Activated B cell treated with CpG ODN at 0.5 μM for 24 hours (primary cell): ENCODE measurements at regions of chr1 and their contacts with region 1.

Region 1: GRCh38 chr1:26921540-26922430 is at the start of gene NUDC:
- DNase-seq: peak; percentile 88
- ATAC-seq: peak; percentile 95
- H3K4me3 Mint-ChIP-seq: peak within 1 kb of the TSS; percentile 96
- H3K27ac Mint-ChIP-seq: peak within 1 kb of the TSS; percentile 95
- H3K4me1 Mint-ChIP-seq: peaks cover 31% of the 10 kb centered on the region
- H3K27me3 Mint-ChIP-seq: no peaks in the 10 kb centered on the region
- CTCF ChIP-seq: no peak
- total RNA-seq, gene NUDC: 71.7 and 73.7 TPM in 2 replicates

Region 2: DNA sequence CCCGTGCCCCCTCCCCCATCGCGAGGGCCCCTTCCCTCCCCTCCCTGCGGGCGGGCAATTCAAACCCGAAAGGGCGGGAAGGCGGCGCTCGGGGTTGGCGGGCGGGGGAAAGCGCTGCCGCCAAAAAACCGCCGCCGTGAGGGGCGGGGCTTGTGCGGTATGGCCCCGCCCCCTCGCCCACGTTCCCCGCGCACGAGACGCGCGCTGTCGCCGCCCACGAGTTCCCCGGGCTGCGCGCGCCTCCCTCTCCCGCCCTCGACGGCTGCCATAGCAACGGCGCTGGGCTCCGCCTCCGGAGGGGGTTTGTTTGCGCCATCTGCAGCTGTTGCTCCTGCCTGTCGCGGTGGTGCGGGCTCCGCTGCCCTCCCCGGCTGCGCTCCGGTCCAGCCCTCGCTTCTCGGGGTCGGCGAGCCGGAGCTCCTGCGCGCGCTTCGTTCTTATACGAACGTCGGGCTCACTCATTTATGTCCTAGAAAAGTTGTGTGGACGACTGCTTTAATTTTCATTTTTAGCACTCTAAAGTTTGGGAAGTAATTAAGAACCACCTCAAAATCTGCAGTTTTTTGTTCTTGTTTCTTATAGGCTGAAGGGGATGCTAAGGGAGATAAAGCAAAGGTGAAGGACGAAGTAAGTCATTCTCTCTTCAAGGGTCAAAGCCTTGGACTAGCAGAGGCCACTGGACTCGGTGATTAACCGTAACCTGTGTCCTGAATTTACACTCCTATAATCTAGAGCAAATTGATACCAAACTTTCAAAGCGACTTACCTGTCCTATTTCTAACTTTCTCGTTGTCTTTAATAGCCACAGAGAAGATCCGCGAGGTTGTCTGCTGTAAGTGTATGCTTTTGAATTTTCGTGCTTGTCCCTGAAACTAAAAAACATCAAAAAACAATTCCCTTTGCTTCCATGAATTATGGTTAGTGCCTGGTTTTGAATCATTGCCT is 448.6 kb before region 1 on chr1:
- CTCF ChIA-PET with region 1: no interaction called
- POLR2A ChIA-PET with region 1: interaction called, 3 read pairs
- intact Hi-C with region 1: loop called (anchors 1 kb)
- DNase-seq: peak; percentile 95
- ATAC-seq: peak; percentile 78
- H3K4me3 Mint-ChIP-seq: peak overlapping the region; percentile 88
- H3K27ac Mint-ChIP-seq: peak overlapping the region; percentile 84
- H3K4me1 Mint-ChIP-seq: peaks cover 58% of the 10 kb centered on the region
- H3K27me3 Mint-ChIP-seq: no peaks in the 10 kb centered on the region
- CTCF ChIP-seq: no peak

Region 3: GRCh38 chr1:26900001-26900814 is 21.6 kb before region 1 on chr1 and contains the start of gene GPATCH3:
- CTCF ChIA-PET with region 1: interaction called, 3 read pairs
- POLR2A ChIA-PET with region 1: interaction called, 26 read pairs
- intact Hi-C with region 1: loop called (anchors 1 kb)
- DNase-seq: peak; percentile 68
- ATAC-seq: peak; percentile 89
- H3K4me3 Mint-ChIP-seq: peak within 1 kb of the TSS; percentile 99
- H3K27ac Mint-ChIP-seq: peak within 1 kb of the TSS; percentile 100
- H3K4me1 Mint-ChIP-seq: peaks cover 32% of the 10 kb centered on the region
- H3K27me3 Mint-ChIP-seq: no peaks in the 10 kb centered on the region
- CTCF ChIP-seq: no peak
- total RNA-seq, gene GPATCH3: 24.0 and 26.0 TPM in 2 replicates

Region 4: GRCh38 chr1:26959722-26960615 is 38.2 kb after region 1 on chr1 and contains the start of gene KDF1:
- CTCF ChIA-PET with region 1: no interaction called
- POLR2A ChIA-PET with region 1: interaction called, 3 read pairs
- intact Hi-C with region 1: loop called (anchors 1 kb)
- DNase-seq: peak; percentile 54
- ATAC-seq: peak; percentile 93
- H3K4me3 Mint-ChIP-seq: peak within 1 kb of the TSS; percentile 79
- H3K27ac Mint-ChIP-seq: peak within 1 kb of the TSS; percentile 53
- H3K4me1 Mint-ChIP-seq: peaks cover 14% of the 10 kb centered on the region
- H3K27me3 Mint-ChIP-seq: peaks cover 15% of the 10 kb centered on the region
- CTCF ChIP-seq: no peak
- total RNA-seq, gene KDF1: 0.59 and 0.75 TPM in 2 replicates

Region 5: DNA sequence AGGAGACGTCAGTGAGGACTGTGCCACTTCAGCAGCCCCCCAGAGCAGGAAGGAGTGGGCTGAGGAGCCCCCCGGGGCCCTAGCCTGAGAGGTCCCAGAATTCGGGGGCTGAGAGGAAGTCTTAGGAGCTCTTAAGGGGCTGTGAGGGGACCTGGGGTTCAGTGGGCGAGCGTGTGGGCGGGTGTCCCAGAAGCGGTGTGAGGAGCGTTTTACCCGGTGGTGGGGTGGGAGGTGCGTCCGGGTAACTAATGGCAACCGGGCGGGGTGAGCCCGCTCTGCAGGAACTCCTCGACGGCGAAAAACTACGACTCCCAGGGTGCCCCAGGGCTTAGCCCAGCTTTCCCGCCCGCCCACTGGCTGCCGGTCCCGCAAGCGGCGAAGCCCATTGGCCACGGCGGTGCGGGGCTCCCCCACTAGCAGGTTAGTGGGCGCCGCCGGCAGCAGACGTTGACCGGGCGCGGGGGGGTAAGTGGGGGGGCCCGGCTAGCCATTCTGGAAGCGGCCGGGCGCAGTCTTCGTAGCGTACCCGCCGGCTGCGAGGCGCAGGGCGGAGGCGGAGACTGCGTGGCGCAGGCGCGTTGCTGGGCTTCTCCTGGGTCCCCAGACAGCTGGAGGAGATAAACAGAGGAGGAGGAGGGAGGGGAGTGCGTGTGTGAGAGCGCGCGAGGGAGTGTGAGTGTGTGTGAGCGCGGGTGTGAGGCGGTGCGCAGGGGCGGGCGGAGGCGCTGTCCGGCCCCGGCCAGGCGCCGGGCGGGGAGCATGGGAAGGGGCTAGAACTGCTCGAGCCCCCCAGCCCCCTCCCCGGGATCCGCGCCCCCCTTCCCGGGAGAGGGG is 312.5 kb after region 1 on chr1 and contains the start of gene WDTC1:
- CTCF ChIA-PET with region 1: no interaction called
- POLR2A ChIA-PET with region 1: no interaction called
- intact Hi-C with region 1: loop called (anchors 10 kb)
- DNase-seq: peak; percentile 94
- ATAC-seq: peak; percentile 91
- H3K4me3 Mint-ChIP-seq: peak within 1 kb of the TSS; percentile 98
- H3K27ac Mint-ChIP-seq: peak within 1 kb of the TSS; percentile 90
- H3K4me1 Mint-ChIP-seq: peaks cover 30% of the 10 kb centered on the region
- H3K27me3 Mint-ChIP-seq: no peaks in the 10 kb centered on the region
- CTCF ChIP-seq: no peak
- total RNA-seq, gene WDTC1: 62.8 and 65.1 TPM in 2 replicates